Breast epithelium (tissue), 4 donors: ENCODE measurements at regions of chr13 and their contacts with region 1.

Region 1: DNA sequence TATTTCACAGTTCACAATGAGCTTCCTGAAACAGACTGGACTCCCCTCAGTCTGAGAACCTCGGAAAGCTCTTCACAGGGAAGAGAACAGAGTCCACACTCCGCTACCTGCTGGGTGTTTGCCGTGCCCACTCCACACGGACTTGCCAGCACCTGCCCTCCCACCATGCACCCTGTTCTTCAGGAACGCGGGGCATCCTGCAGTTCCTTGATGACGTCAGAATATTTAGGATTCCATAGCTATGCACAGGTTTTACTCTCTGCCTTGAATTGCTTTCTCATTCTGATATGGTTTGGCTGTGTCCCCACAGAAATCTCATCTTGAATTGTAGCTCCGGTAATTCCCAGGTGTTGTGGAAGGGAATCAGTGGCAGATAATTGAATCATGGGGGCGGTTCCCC is 74.4 kb upstream of the FARP1 start:
- DNase-seq: no peak
- H3K4me3 ChIP-seq: peak overlapping the region in 1 of 3 donors; percentile 17
- H3K27ac ChIP-seq: no peak overlapping the region
- H3K4me1 ChIP-seq: no peaks in the 10 kb centered on the region
- H3K27me3 ChIP-seq: no peaks in the 10 kb centered on the region
- CTCF ChIP-seq: no peak
- POLR2A ChIP-seq: no peak

Region 2: GRCh38 chr13:98228661-98229341 is 160.3 kb after region 1 on chr13:
- intact Hi-C with region 1: no loop called
- DNase-seq: no peak
- H3K4me3 ChIP-seq: no peak overlapping the region
- H3K27ac ChIP-seq: no peak overlapping the region
- H3K4me1 ChIP-seq: no peaks in the 10 kb centered on the region
- H3K27me3 ChIP-seq: no peaks in the 10 kb centered on the region
- CTCF ChIP-seq: no peak
- POLR2A ChIP-seq: no peak

Region 3: GRCh38 chr13:98672944-98673545 is 604.5 kb after region 1 on chr13:
- intact Hi-C with region 1: no loop called
- DNase-seq: peak; percentile 59 to 62
- H3K4me3 ChIP-seq: peak overlapping the region in 1 of 3 donors; percentile 21
- H3K27ac ChIP-seq: peak overlapping the region in 1 of 2 donors; percentile 7
- H3K4me1 ChIP-seq: no peaks in the 10 kb centered on the region
- H3K27me3 ChIP-seq: no peaks in the 10 kb centered on the region
- CTCF ChIP-seq: peak; percentile 80 to 89 (median 86)
- POLR2A ChIP-seq: no peak

Region 4: GRCh38 chr13:99009987-99010551 is 941.5 kb after region 1 on chr13:
- intact Hi-C with region 1: loop called (anchors 5 kb)
- DNase-seq: no peak
- H3K4me3 ChIP-seq: no peak overlapping the region
- H3K27ac ChIP-seq: no peak overlapping the region
- H3K4me1 ChIP-seq: no peaks in the 10 kb centered on the region
- H3K27me3 ChIP-seq: no peaks in the 10 kb centered on the region
- CTCF ChIP-seq: no peak
- POLR2A ChIP-seq: no peak